Dendritic cell treated with granulocyte-macrophage colony-stimulating factor and Interleukin-4, amounts not matched to agents 40 ng/mL and 50 ng/mL, for 4 days (primary cell): ENCODE measurements at regions of chr2 and their contacts with region 1.

Region 1: GRCh38 chr2:96638144-96639121 is at the start of gene KANSL3:
- H3K4me3 Mint-ChIP-seq: peak within 1 kb of the TSS; percentile 91
- H3K27ac Mint-ChIP-seq: peak within 1 kb of the TSS; percentile 92
- H3K4me1 Mint-ChIP-seq: peaks cover 33% of the 10 kb centered on the region
- H3K27me3 Mint-ChIP-seq: peaks cover 2% of the 10 kb centered on the region

Region 2: DNA sequence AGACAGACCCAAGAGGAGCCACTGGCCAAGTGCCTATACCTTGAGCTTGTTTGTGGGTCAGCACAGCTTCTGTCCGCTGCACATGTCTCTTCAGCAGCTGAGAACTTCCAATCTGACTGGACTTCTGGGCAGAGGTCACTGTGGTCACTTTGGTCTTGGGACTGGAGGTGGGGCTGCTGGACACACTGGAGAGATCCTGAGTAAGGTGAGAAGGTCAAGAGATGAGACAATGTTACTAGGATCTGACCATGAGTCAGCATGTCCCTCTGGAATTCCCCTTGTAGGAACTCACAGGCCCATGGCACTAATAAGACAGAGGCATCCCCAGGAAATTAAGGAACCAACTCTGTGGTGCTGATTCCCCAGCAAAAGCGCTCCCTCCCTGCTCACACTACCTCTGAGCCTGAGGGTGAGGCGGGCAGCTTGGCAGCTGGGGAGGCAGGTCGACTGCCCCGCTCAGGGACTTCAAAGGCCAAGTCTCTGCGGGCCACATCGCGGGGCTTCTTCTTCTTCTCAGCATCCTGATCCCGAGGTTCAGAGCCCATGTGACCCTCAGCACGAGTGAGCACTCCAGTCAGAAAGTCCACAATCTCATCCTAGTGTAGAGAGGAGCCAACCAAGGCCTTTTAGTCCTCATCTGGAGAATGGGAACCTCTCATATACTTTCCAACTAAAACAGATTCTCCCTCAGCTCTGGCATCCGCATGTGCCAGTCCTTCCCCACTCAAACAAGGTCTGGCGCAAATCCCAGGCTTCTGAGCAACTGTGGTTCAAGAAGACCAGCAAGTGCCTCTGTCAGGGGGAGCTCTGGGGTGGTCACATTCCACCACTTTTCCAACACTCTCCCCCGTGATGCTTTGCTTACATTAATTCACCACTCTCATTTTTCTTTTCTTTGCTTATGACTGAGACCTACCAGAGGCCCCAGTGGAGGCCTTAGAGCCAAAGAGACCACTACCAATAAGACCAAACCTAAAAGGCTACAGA is 29.7 kb before region 1 on chr2:
- intact Hi-C with region 1: no loop called
- H3K4me3 Mint-ChIP-seq: no peak overlapping the region
- H3K27ac Mint-ChIP-seq: peak overlapping the region; percentile 67
- H3K4me1 Mint-ChIP-seq: peaks cover 45% of the 10 kb centered on the region
- H3K27me3 Mint-ChIP-seq: no peaks in the 10 kb centered on the region

Region 3: DNA sequence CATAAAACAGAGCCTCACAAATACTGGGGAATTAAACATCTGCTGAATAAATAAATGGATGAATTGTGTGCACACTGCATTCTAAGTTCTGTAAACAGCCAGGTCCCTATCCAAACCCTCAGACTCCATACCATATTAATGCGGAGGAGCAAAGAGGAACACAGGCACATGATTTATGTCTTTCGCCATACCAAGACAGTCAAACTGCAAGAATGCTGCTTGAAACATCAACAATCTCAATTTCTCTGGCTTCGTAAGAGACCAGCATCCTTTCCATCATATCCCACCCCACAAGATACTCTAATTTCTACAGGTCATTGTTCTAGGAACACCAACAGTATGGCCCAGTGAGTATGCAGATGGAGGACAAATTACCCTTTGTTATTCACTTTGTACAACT is 15.3 kb before region 1 on chr2:
- intact Hi-C with region 1: loop called (anchors 2 kb)
- H3K4me3 Mint-ChIP-seq: peak overlapping the region; percentile 33
- H3K27ac Mint-ChIP-seq: peak overlapping the region; percentile 58
- H3K4me1 Mint-ChIP-seq: peaks cover 46% of the 10 kb centered on the region
- H3K27me3 Mint-ChIP-seq: no peaks in the 10 kb centered on the region

Region 4: DNA sequence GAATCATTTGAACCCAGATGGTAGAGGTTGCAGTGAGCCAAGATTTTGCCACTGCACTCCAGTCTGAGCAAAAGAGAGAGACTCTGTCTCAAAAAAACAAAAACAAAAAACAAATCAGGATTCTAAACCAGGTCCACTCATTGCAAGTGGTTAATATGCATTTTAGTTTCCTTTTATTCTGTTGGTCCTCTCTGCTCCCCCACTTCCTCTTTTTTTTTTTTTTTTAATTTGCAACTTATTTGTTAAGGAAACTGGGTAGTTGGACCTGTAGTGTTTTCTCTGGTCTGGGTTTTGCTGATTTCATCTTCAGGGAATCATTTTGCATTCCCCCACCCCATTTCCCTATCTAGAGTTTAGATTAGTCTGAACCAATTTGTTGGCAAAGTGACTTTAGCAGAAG is 18.1 kb after region 1 on chr2:
- intact Hi-C with region 1: no loop called
- H3K4me3 Mint-ChIP-seq: no peak overlapping the region
- H3K27ac Mint-ChIP-seq: peak overlapping the region; percentile 45
- H3K4me1 Mint-ChIP-seq: peaks cover 29% of the 10 kb centered on the region
- H3K27me3 Mint-ChIP-seq: no peaks in the 10 kb centered on the region

Region 5: GRCh38 chr2:96739633-96740428 is 101.4 kb after region 1 on chr2 and contains the start of gene LMAN2L:
- intact Hi-C with region 1: loop called (anchors 1 kb)
- H3K4me3 Mint-ChIP-seq: peak within 1 kb of the TSS; percentile 94
- H3K27ac Mint-ChIP-seq: peak within 1 kb of the TSS; percentile 91
- H3K4me1 Mint-ChIP-seq: peaks cover 24% of the 10 kb centered on the region
- H3K27me3 Mint-ChIP-seq: no peaks in the 10 kb centered on the region